Endothelial cell of umbilical vein (primary cell): ENCODE measurements at regions of chr6 and their contacts with region 1.

Region 1: GRCh38 chr6:138115877-138116660 is 8.8 kb upstream of the PERP start:
- DNase-seq: peak; percentile 71
- H3K4me3 ChIP-seq: no peak overlapping the region
- H3K27ac ChIP-seq: no peak overlapping the region
- H3K4me1 ChIP-seq: no peaks in the 10 kb centered on the region
- H3K27me3 ChIP-seq: peaks cover 5 to 8% of the 10 kb centered on the region in 2 experiments
- CTCF ChIP-seq: peak; percentile 42 to 44
- POLR2A ChIP-seq: no peak

Region 2: GRCh38 chr6:138007014-138007472 is 109.0 kb before region 1 on chr6:
- CTCF ChIA-PET with region 1: interaction called, 10 read pairs
- POLR2A ChIA-PET with region 1: no interaction called
- dilution Hi-C with region 1: no loop called
- intact Hi-C with region 1: no loop called
- DNase-seq: peak; percentile 27
- H3K4me3 ChIP-seq: no peak overlapping the region
- H3K27ac ChIP-seq: no peak overlapping the region
- H3K4me1 ChIP-seq: no peaks in the 10 kb centered on the region
- H3K27me3 ChIP-seq: no peaks in the 10 kb centered on the region
- CTCF ChIP-seq: peak; percentile 50 to 63
- POLR2A ChIP-seq: no peak

Region 3: DNA sequence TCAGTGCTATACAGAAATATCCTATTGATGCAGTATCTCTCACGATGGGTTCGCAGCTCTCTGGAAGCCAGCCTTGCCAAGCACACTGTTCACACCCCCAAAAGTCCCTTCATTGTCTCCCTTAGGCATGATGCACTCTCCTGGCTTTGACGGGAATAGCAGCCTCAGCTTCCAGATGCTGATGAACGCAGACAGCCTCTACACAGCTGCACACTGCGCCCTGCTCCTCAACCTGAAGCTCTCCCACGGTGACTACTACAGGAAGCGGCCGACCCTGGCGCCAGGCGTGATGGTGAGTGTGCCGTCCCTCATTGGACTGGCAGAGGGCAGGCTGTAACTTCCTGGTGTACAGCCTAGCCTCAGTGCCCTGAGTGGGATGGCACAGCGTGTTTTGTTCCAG is 162.3 kb after region 1 on chr6:
- CTCF ChIA-PET with region 1: interaction called, 28 read pairs
- POLR2A ChIA-PET with region 1: no interaction called
- dilution Hi-C with region 1: no loop called
- intact Hi-C with region 1: loop called (anchors 1 kb)
- DNase-seq: no peak
- H3K4me3 ChIP-seq: no peak overlapping the region
- H3K27ac ChIP-seq: no peak overlapping the region
- H3K4me1 ChIP-seq: no peaks in the 10 kb centered on the region
- H3K27me3 ChIP-seq: no peaks in the 10 kb centered on the region
- CTCF ChIP-seq: peak; percentile 10 to 34
- POLR2A ChIP-seq: no peak

Region 4: GRCh38 chr6:138403801-138404661 is 288.0 kb after region 1 on chr6 and contains the start of gene HEBP2:
- CTCF ChIA-PET with region 1: interaction called, 50 read pairs
- POLR2A ChIA-PET with region 1: no interaction called
- dilution Hi-C with region 1: no loop called
- intact Hi-C with region 1: loop called (anchors 1 kb)
- DNase-seq: peak; percentile 86
- H3K4me3 ChIP-seq: peak within 1 kb of the TSS; percentile 51 to 78 (median 76)
- H3K27ac ChIP-seq: peak within 1 kb of the TSS; percentile 76
- H3K4me1 ChIP-seq: peaks cover 11% of the 10 kb centered on the region
- H3K27me3 ChIP-seq: no peaks in the 10 kb centered on the region
- CTCF ChIP-seq: peak; percentile 53 to 66
- POLR2A ChIP-seq: peak; percentile 61
- total RNA-seq, gene HEBP2: 75.3 and 81.2 TPM in 2 replicates

Region 5: GRCh38 chr6:138509371-138509770 is 393.3 kb after region 1 on chr6:
- CTCF ChIA-PET with region 1: interaction called, 16 read pairs
- POLR2A ChIA-PET with region 1: no interaction called
- dilution Hi-C with region 1: no loop called
- intact Hi-C with region 1: loop called (anchors 2 kb)
- DNase-seq: peak; percentile 59
- H3K4me3 ChIP-seq: no peak overlapping the region
- H3K27ac ChIP-seq: no peak overlapping the region
- H3K4me1 ChIP-seq: no peaks in the 10 kb centered on the region
- H3K27me3 ChIP-seq: no peaks in the 10 kb centered on the region
- CTCF ChIP-seq: peak; percentile 37 to 38
- POLR2A ChIP-seq: no peak

Region 6: GRCh38 chr6:138765896-138766655 is 650.0 kb after region 1 on chr6:
- CTCF ChIA-PET with region 1: interaction called, 24 read pairs
- POLR2A ChIA-PET with region 1: no interaction called
- dilution Hi-C with region 1: no loop called
- intact Hi-C with region 1: loop called (anchors 2 kb)
- DNase-seq: peak; percentile 64
- H3K4me3 ChIP-seq: no peak overlapping the region
- H3K27ac ChIP-seq: no peak overlapping the region
- H3K4me1 ChIP-seq: peaks cover 32% of the 10 kb centered on the region
- H3K27me3 ChIP-seq: no peaks in the 10 kb centered on the region
- CTCF ChIP-seq: peak; percentile 22 to 40
- POLR2A ChIP-seq: no peak